GM12878 (cell line): ENCODE measurements at regions of chrX and their contacts with region 1.

Region 1: GRCh38 chrX:38704146-38704882 is 96.9 kb upstream of the MID1IP1 start:
- DNase-seq: no peak
- ATAC-seq: no peak
- H3K4me3 ChIP-seq: no peak overlapping the region
- H3K27ac ChIP-seq: no peak overlapping the region
- H3K4me1 ChIP-seq: no peaks in the 10 kb centered on the region
- H3K27me3 ChIP-seq: no peaks in the 10 kb centered on the region
- CTCF ChIP-seq: no peak
- EP300 ChIP-seq: no peak
- POLR2A ChIP-seq: no peak
- RAD21 ChIP-seq: no peak

Region 2: GRCh38 chrX:38612281-38612680 is 92.0 kb before region 1 on chrX:
- CTCF ChIA-PET with region 1: no interaction called
- POLR2A ChIA-PET with region 1: no interaction called
- RAD21 ChIA-PET with region 1: no interaction called
- SMC1A ChIA-PET with region 1: no interaction called
- in situ Hi-C with region 1: no loop called
- intact Hi-C with region 1: no loop called
- DNase-seq: no peak
- ATAC-seq: no peak
- H3K4me3 ChIP-seq: no peak overlapping the region
- H3K27ac ChIP-seq: no peak overlapping the region
- H3K4me1 ChIP-seq: no peaks in the 10 kb centered on the region
- H3K27me3 ChIP-seq: no peaks in the 10 kb centered on the region
- CTCF ChIP-seq: no peak
- EP300 ChIP-seq: no peak
- POLR2A ChIP-seq: no peak
- RAD21 ChIP-seq: no peak

Region 3: DNA sequence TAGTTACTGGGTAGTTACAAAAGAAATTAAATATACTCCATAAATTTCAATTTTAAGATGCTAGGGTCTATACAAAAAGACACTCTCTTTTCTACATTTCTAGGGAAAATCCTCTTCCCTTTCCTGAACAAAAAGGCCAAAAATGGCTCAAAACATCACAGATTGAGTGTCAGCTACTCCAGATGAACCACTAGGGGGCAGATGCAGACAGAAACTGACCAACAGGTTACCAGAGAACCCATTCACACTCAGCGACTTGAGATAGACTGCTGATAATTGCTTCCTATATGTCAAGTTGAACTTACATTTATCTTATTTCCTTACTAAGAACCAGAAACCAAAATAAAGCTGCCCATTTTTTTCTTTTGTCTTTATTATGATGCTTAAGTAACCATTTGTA is 13.6 kb after region 1 on chrX:
- CTCF ChIA-PET with region 1: interaction called, 15 read pairs
- POLR2A ChIA-PET with region 1: no interaction called
- RAD21 ChIA-PET with region 1: no interaction called
- SMC1A ChIA-PET with region 1: no interaction called
- in situ Hi-C with region 1: no loop called
- intact Hi-C with region 1: no loop called
- DNase-seq: no peak
- ATAC-seq: peak; percentile 50; the same call in 1 of the 3 replicates
- H3K4me3 ChIP-seq: no peak overlapping the region
- H3K27ac ChIP-seq: no peak overlapping the region
- H3K4me1 ChIP-seq: no peaks in the 10 kb centered on the region
- H3K27me3 ChIP-seq: no peaks in the 10 kb centered on the region
- CTCF ChIP-seq: peak; percentile 23 to 50 (median 42); a peak in 4 of 6 replicates
- EP300 ChIP-seq: no peak
- POLR2A ChIP-seq: no peak
- RAD21 ChIP-seq: peak; percentile 39

Region 4: DNA sequence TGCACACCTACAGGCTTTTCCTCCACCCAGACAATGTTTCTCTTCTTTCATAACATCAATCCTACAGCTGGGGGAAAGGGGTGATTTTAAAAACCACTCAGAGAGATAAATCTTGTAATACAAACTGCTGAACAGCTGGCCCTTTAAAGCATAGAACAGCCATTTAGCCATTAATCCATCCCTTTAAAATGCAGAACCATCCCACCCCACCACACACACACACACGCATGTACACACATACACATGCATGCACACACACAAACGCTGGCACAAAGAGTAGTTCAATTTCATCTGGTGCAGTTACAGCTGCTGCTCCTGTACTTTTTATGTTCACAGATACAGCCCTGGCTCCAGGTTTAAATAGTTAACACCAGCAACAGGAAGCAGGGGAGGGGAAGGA is 523.1 kb after region 1 on chrX:
- CTCF ChIA-PET with region 1: no interaction called
- POLR2A ChIA-PET with region 1: no interaction called
- RAD21 ChIA-PET with region 1: no interaction called
- SMC1A ChIA-PET with region 1: no interaction called
- in situ Hi-C with region 1: no loop called
- intact Hi-C with region 1: no loop called
- DNase-seq: no peak
- ATAC-seq: no peak
- H3K4me3 ChIP-seq: no peak overlapping the region
- H3K27ac ChIP-seq: no peak overlapping the region
- H3K4me1 ChIP-seq: no peaks in the 10 kb centered on the region
- H3K27me3 ChIP-seq: no peaks in the 10 kb centered on the region
- CTCF ChIP-seq: no peak
- EP300 ChIP-seq: no peak
- POLR2A ChIP-seq: no peak
- RAD21 ChIP-seq: no peak